WTC11 (cell line): ENCODE measurements at regions of chr11 and their contacts with region 1.

Region 1: GRCh38 chr11:44388828-44389657 is 79.1 kb upstream of the ALX4 start:
- DNase-seq: no peak
- ATAC-seq: peak; percentile 69
- H3K4me3 Mint-ChIP-seq: peak overlapping the region; percentile 62
- H3K27ac Mint-ChIP-seq: peak overlapping the region; percentile 58
- H3K4me1 Mint-ChIP-seq: peaks cover 16% of the 10 kb centered on the region
- H3K27me3 Mint-ChIP-seq: peaks cover 19% of the 10 kb centered on the region
- CTCF ChIP-seq: no peak

Region 2: DNA sequence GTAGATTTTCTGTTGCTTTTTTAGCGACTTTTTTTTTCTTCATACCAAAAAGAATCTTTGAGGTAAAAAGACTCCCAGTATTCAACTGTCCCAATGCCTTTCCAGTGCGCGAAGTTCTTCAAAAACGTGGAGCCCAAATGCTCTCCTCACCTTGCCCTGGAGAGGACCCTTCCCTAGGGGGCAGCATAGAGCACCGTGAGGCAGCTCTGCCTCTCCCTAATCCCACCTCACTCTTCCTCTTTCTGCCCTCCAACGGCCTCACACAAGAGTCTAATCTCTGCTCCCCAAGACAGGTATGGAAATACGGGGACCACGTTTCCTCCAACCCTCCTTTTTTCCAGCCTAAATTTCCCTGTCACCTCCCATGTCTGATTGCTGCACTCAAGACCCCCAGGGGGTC is 38.4 kb after region 1 on chr11:
- CTCF ChIA-PET with region 1: interaction called, 11 read pairs
- POLR2A ChIA-PET with region 1: no interaction called
- DNase-seq: peak; percentile 83
- ATAC-seq: peak; percentile 93
- H3K4me3 Mint-ChIP-seq: no peak overlapping the region
- H3K27ac Mint-ChIP-seq: no peak overlapping the region
- H3K4me1 Mint-ChIP-seq: peaks cover 11% of the 10 kb centered on the region
- H3K27me3 Mint-ChIP-seq: peaks cover 3% of the 10 kb centered on the region
- CTCF ChIP-seq: peak; percentile 74

Region 3: DNA sequence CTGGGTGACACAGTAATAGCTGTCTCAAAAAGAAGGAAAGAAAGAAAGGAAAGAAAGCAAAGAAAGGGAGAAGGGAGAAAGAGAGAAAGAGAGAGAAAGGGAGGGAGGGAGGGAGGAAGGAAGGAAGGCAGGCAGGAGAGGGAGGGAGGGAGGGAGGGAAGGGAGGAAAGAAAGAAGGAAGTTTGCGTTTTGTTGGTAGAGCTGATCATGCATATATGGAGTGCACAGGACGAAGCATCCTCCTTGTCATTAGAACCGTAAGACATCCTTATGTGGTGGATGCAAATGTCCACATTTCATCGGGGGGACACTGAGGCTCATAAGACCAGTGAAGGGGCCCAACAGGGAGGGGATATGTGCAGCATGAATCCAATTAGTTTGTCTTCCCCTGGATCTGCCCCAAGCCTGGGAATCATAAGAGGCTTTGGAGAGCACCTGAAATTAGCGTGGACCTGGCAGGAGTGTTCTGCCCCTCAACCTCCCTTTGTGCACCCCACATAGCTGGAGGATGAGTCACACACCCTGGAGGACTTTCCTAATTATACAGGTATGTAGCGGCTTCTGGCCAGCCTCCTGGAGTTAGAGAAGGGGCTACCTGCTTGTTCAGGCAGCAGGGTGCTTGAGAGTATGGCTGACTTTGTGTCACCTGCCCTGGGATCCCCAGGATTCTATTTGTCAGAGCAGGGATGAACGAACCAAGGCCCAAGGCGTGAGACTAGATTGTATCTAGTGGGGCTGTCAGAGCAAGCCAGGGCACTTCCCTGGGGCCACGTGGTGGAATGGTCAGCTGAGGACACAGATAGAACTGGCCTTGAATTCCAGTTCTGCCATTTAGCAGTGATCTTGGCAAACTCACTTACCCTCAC is 56.7 kb after region 1 on chr11:
- CTCF ChIA-PET with region 1: no interaction called
- POLR2A ChIA-PET with region 1: no interaction called
- DNase-seq: peak; percentile 39
- ATAC-seq: peak; percentile 76
- H3K4me3 Mint-ChIP-seq: no peak overlapping the region
- H3K27ac Mint-ChIP-seq: no peak overlapping the region
- H3K4me1 Mint-ChIP-seq: peaks cover 16% of the 10 kb centered on the region
- H3K27me3 Mint-ChIP-seq: peaks cover 5% of the 10 kb centered on the region
- CTCF ChIP-seq: no peak